ENCODE measurements at regions of chr10 and their contacts with region 1.

Region 1: GRCh38 chr10:132516771-132517725 is 20.5 kb upstream of the INPP5A start:
- DNase-seq: peak; percentile 63
- H3K4me3 ChIP-seq: no peak overlapping the region
- H3K27ac ChIP-seq: peak overlapping the region; percentile 51 to 78
- H3K4me1 ChIP-seq: peaks cover 10% of the 10 kb centered on the region
- H3K27me3 ChIP-seq: no peaks in the 10 kb centered on the region
- CTCF ChIP-seq: no peak
- POLR2A ChIP-seq: peak; percentile 21

Region 2: GRCh38 chr10:132387764-132388210 is 129.3 kb before region 1 on chr10:
- intact Hi-C with region 1: loop called (anchors 5 kb)
- DNase-seq: no peak
- H3K4me3 ChIP-seq: no peak overlapping the region
- H3K27ac ChIP-seq: no peak overlapping the region
- H3K4me1 ChIP-seq: no peaks in the 10 kb centered on the region
- H3K27me3 ChIP-seq: no peaks in the 10 kb centered on the region
- CTCF ChIP-seq: peak; percentile 63 to 84 (median 74)
- POLR2A ChIP-seq: no peak